Ascending aorta (tissue), 2 donors: ENCODE measurements at regions of chr2 and their contacts with region 1.

Region 1: DNA sequence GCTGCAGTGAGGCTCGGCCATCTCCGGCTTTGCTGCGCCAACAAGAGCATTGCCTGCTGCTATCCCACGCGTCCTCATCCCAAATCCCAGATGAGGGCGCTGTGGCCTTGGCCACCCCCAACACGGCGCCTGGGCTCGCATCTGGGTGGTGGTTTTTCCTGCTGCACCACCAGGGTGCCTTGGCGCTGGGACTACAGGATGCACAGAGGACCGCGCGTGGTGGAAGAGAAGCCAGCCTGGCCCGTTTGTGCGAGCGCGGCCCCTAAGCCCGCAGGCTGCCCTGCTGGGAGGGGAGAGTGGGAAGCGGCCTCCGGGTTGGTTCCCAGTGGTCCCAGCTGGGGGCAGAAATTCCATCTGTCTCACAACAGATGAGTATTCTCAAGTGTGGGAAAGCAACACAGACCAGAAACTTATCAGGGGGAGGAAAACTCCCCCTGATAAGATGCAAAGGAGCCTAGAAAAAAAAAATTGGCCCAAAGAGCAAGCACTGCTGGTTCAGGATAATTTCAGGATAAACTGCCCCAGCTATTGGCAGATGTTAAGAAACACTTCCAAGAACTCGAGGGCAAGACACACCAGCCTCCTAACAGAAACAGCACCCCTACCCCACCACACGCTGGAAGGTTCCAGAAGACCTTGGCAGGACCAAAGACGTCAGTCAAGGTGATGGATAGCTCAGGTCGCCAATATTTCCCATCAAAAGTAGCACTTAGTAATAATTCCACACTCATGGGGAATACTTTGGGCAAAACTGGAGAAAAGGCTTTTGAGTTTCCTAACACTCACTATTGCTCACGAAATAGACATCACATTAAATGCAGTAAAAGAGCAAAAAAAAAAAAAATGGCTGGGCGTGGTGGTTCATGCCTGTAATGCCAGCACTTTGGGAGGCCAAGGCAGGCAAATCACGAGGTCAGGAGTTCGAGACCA is 152.1 kb downstream of the PXDN start:
- DNase-seq: peak; percentile 32 to 89
- H3K4me3 ChIP-seq: peak overlapping the region; percentile 12 to 36
- H3K27ac ChIP-seq: peak overlapping the region; percentile 33 to 55
- H3K4me1 ChIP-seq: peaks cover 0 to 9% of the 10 kb centered on the region in 2 donors
- H3K27me3 ChIP-seq: no peaks in the 10 kb centered on the region
- CTCF ChIP-seq: peak; percentile 76 to 88 (median 88)

Region 2: DNA sequence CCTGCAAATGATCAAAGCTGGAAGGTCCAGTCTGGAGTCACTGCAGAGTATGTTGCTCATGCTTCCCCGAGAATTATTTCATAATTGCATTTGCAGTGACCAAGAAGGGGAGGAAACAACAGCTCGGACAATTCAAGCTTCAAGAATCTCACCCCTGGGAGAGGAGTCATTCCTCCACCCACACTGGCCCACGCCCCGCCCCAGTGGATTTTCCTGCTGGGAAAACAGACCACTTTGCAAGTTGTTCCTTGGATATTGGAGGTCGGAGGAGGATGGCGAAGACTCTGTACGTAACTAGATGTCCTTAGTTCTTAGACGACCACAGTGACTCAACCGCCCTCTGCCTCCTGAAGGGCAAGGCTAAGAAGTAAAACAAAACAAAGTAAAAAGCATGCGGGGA is 19.6 kb before region 1 on chr2:
- intact Hi-C with region 1: no loop called
- DNase-seq: peak in 1 of 2 donors; percentile 64
- H3K4me3 ChIP-seq: no peak overlapping the region
- H3K27ac ChIP-seq: no peak overlapping the region
- H3K4me1 ChIP-seq: no peaks in the 10 kb centered on the region
- H3K27me3 ChIP-seq: no peaks in the 10 kb centered on the region
- CTCF ChIP-seq: no peak

Region 3: GRCh38 chr2:1625208-1625937 is 33.1 kb after region 1 on chr2:
- intact Hi-C with region 1: loop called (anchors 5 kb)
- DNase-seq: no peak
- H3K4me3 ChIP-seq: no peak overlapping the region
- H3K27ac ChIP-seq: no peak overlapping the region
- H3K4me1 ChIP-seq: peaks cover 0 to 8% of the 10 kb centered on the region in 2 donors
- H3K27me3 ChIP-seq: no peaks in the 10 kb centered on the region
- CTCF ChIP-seq: no peak

Region 4: GRCh38 chr2:1675633-1676032 is 83.4 kb after region 1 on chr2:
- intact Hi-C with region 1: loop called (anchors 1 kb)
- DNase-seq: peak; percentile 39 to 86
- H3K4me3 ChIP-seq: no peak overlapping the region
- H3K27ac ChIP-seq: peak overlapping the region; percentile 49 to 76
- H3K4me1 ChIP-seq: peaks cover 0 to 8% of the 10 kb centered on the region in 2 donors
- H3K27me3 ChIP-seq: no peaks in the 10 kb centered on the region
- CTCF ChIP-seq: peak; percentile 19 to 53 (median 35)

Region 5: GRCh38 chr2:1750933-1751766 is 158.9 kb after region 1 on chr2:
- intact Hi-C with region 1: loop called (anchors 1 kb)
- DNase-seq: peak in 1 of 2 donors; percentile 87
- H3K4me3 ChIP-seq: no peak overlapping the region
- H3K27ac ChIP-seq: no peak overlapping the region
- H3K4me1 ChIP-seq: peaks cover 0 to 10% of the 10 kb centered on the region in 2 donors
- H3K27me3 ChIP-seq: no peaks in the 10 kb centered on the region
- CTCF ChIP-seq: peak; percentile 70 to 88 (median 86)

Region 6: GRCh38 chr2:1817256-1818051 is 225.2 kb after region 1 on chr2:
- intact Hi-C with region 1: loop called (anchors 2 kb)
- DNase-seq: peak; percentile 80 to 98
- H3K4me3 ChIP-seq: peak overlapping the region in 1 of 2 donors; percentile 43
- H3K27ac ChIP-seq: peak overlapping the region; percentile 90 to 98
- H3K4me1 ChIP-seq: peaks cover 5 to 32% of the 10 kb centered on the region in 2 donors
- H3K27me3 ChIP-seq: no peaks in the 10 kb centered on the region
- CTCF ChIP-seq: peak; percentile 97 to 99 (median 99)

Region 7: DNA sequence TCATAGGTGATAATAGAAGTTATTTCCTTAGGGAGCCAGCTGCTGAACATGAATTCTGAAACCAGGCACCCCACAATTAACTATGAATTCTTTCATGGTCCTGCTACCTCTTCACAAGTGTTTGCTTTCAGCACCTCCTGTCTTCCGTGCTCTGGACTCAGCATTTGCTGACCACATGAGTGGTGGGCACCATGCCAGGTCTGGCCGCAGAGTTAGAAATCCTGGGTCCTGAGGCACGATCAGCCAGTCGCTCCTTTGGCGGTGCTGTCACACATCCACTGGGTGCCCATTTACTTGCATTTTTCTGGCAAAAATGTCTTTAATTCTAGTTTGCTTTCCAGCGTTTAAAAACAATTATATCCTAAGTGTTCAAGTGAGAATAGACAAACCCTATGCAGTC is 348.4 kb after region 1 on chr2:
- intact Hi-C with region 1: no loop called
- DNase-seq: no peak
- H3K4me3 ChIP-seq: no peak overlapping the region
- H3K27ac ChIP-seq: no peak overlapping the region
- H3K4me1 ChIP-seq: no peaks in the 10 kb centered on the region
- H3K27me3 ChIP-seq: no peaks in the 10 kb centered on the region
- CTCF ChIP-seq: no peak